Activated CD4-positive, alpha-beta memory T cell treated with anti-CD3 and anti-CD28 coated beads, Interleukin-2, amount 10 ng/mL, durations not matched to agents 7 days and 5 days (primary cell): ENCODE measurements at regions of chr18 and their contacts with region 1.

Region 1: GRCh38 chr18:51051105-51051712 is 21.2 kb downstream of the SMAD4 start:
- DNase-seq: no peak
- H3K4me3 Mint-ChIP-seq: no peak overlapping the region
- H3K27ac Mint-ChIP-seq: peak overlapping the region; percentile 44
- H3K4me1 Mint-ChIP-seq: peaks cover 28% of the 10 kb centered on the region
- H3K27me3 Mint-ChIP-seq: no peaks in the 10 kb centered on the region

Region 2: GRCh38 chr18:50819728-50820378 is 231.4 kb before region 1 on chr18 and contains the start of gene MRO:
- CTCF ChIA-PET with region 1: interaction called, 27 read pairs
- POLR2A ChIA-PET with region 1: interaction called, 3 read pairs
- DNase-seq: peak; percentile 81
- H3K4me3 Mint-ChIP-seq: no peak within 1 kb of the TSS
- H3K27ac Mint-ChIP-seq: no peak within 1 kb of the TSS
- H3K4me1 Mint-ChIP-seq: no peaks in the 10 kb centered on the region
- H3K27me3 Mint-ChIP-seq: peaks cover 13% of the 10 kb centered on the region
- total RNA-seq, gene MRO: not detected

Region 3: DNA sequence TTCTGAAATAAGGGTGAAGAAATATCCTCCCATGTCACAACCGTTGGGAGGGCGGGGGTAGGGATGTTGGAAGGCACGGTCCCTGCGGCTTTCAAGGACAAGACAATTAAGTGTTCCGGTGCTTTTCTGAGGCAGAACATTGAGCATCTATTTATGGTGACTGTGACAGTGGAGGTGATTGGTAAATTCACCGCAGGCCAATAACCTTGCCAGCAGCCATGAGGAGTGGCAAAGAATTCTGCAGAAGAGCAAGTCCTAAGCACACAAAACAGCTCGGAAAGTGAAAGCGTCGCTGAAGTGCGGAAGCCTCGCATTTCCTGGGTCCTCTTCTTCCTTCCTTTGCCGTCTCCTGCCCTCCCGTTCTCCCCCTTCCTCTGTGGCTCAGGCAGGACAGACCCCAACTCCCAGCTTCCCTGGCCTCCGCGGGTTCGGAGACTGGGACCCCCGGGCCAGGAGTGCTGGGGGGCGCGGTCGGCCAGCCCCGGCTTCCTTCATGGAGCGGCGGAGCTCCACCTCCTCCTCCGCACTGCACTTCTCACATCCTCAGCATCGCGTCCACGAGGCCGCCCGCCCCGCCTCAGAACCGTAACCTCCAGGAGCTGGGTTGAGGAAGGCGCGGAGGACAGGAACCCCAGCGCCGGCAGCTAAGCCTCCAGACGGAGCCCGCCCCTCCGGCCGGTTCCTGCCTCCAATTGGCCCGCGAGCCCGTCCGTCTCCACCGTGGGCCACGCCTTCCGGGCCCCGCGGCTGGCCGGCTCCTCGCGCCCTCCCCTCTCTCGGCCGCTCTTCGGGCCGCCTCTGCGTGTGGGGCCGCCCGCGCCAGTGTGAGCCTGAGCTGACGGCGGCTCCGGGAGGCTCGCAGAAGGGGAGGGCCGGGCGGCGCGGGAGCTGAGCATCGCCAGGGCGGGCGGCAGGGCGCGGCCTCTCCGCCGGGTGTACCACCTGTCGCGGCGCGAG is 172.6 kb before region 1 on chr18 and contains the start of gene ME2:
- CTCF ChIA-PET with region 1: interaction called, 7 read pairs
- POLR2A ChIA-PET with region 1: interaction called, 17 read pairs
- DNase-seq: peak; percentile 93
- H3K4me3 Mint-ChIP-seq: peak within 1 kb of the TSS; percentile 95
- H3K27ac Mint-ChIP-seq: peak within 1 kb of the TSS; percentile 98
- H3K4me1 Mint-ChIP-seq: peaks cover 30% of the 10 kb centered on the region
- H3K27me3 Mint-ChIP-seq: peaks cover under 1% of the 10 kb centered on the region
- total RNA-seq, gene ME2: 71.8 to 73.6 TPM

Region 4: GRCh38 chr18:50967714-50968661 is 83.2 kb before region 1 on chr18 and contains the start of gene ELAC1:
- CTCF ChIA-PET with region 1: interaction called, 4 read pairs
- POLR2A ChIA-PET with region 1: interaction called, 20 read pairs
- DNase-seq: peak; percentile 67
- H3K4me3 Mint-ChIP-seq: peak within 1 kb of the TSS; percentile 97
- H3K27ac Mint-ChIP-seq: peak within 1 kb of the TSS; percentile 80
- H3K4me1 Mint-ChIP-seq: peaks cover 28% of the 10 kb centered on the region
- H3K27me3 Mint-ChIP-seq: no peaks in the 10 kb centered on the region
- total RNA-seq, gene ELAC1: 5.9 to 7.3 TPM

Region 5: GRCh38 chr18:51039138-51040112 is 11.8 kb before region 1 on chr18:
- CTCF ChIA-PET with region 1: interaction called, 12 read pairs
- POLR2A ChIA-PET with region 1: interaction called, 4 read pairs
- DNase-seq: no peak
- H3K4me3 Mint-ChIP-seq: no peak overlapping the region
- H3K27ac Mint-ChIP-seq: no peak overlapping the region
- H3K4me1 Mint-ChIP-seq: peaks cover 56% of the 10 kb centered on the region
- H3K27me3 Mint-ChIP-seq: no peaks in the 10 kb centered on the region

Region 6: GRCh38 chr18:51417643-51418483 is 366.7 kb after region 1 on chr18:
- CTCF ChIA-PET with region 1: no interaction called
- POLR2A ChIA-PET with region 1: no interaction called
- DNase-seq: no peak
- H3K4me3 Mint-ChIP-seq: no peak overlapping the region
- H3K27ac Mint-ChIP-seq: no peak overlapping the region
- H3K4me1 Mint-ChIP-seq: no peaks in the 10 kb centered on the region
- H3K27me3 Mint-ChIP-seq: peaks cover 7% of the 10 kb centered on the region